GM12878 (cell line): ENCODE measurements at regions of chr18 and their contacts with region 1.

Region 1: GRCh38 chr18:50079581-50080295 is 115.2 kb downstream of the MYO5B start:
- DNase-seq: no peak
- ATAC-seq: no peak; the same call in 2 of the 3 replicates
- H3K4me3 ChIP-seq: no peak overlapping the region
- H3K27ac ChIP-seq: no peak overlapping the region
- H3K4me1 ChIP-seq: no peaks in the 10 kb centered on the region
- H3K27me3 ChIP-seq: 0 out of 4 replicates have a peak, but pooled peaks cover 0 to 6% of the 10 kb centered on the region in 2 experiments
- CTCF ChIP-seq: no peak
- EP300 ChIP-seq: no peak
- POLR2A ChIP-seq: no peak
- RAD21 ChIP-seq: no peak

Region 2: DNA sequence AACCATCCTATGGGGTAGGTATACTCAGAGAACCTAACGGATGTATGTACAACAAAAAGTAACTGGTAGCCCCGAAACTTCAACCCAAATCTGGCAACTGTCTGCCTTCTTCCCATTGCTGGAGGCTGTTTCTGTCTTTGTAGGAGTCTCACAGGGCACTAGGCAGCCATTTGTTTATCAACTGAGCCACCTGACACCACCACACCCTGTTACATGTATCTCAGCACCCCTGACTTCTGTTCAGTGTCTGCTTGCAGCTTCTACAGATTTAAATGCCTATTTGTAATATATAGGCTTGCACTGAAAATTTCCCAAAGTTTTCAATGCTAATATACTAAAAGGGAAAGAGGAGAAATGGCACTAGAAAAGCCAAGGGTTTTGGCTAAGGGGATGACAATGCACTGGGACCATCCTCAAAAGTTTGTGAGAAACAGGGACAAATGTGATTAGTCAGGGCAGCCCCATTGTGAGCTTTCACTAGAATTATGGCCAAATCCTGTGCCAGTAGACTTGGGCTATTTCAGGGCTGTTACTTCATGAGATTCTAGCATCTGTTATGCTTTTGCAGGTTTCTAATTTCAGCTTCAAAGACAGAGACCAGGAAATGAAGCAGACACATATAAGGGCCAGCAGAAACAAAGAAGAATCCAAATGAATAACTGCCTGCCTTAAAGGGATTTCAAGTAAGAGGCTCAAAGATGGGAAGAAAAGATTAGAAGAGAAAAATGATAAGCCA is 11.9 kb after region 1 on chr18:
- CTCF ChIA-PET with region 1: interaction called, 10 read pairs
- POLR2A ChIA-PET with region 1: interaction called, 5 read pairs
- RAD21 ChIA-PET with region 1: interaction called, 3 read pairs
- SMC1A ChIA-PET with region 1: interaction called, 4 read pairs
- in situ Hi-C with region 1: no loop called
- intact Hi-C with region 1: no loop called
- DNase-seq: no peak
- ATAC-seq: no peak
- H3K4me3 ChIP-seq: no peak overlapping the region
- H3K27ac ChIP-seq: no peak overlapping the region
- H3K4me1 ChIP-seq: no peaks in the 10 kb centered on the region
- H3K27me3 ChIP-seq: peaks cover 0 to 2% of the 10 kb centered on the region in 2 experiments; a peak in 1 of 4 replicates
- CTCF ChIP-seq: no peak
- EP300 ChIP-seq: no peak
- POLR2A ChIP-seq: no peak
- RAD21 ChIP-seq: no peak